HCT116 (cell line): ENCODE measurements at regions of chr10 and their contacts with region 1.

Region 1: GRCh38 chr10:113802997-113803396 is 50.9 kb downstream of the DCLRE1A start:
- DNase-seq: no peak
- ATAC-seq: no peak
- H3K4me3 ChIP-seq: no peak overlapping the region
- H3K27ac ChIP-seq: no peak overlapping the region
- H3K4me1 ChIP-seq: no peaks in the 10 kb centered on the region
- H3K27me3 ChIP-seq: peaks cover 6% of the 10 kb centered on the region; the same call in 1 of the 2 replicates
- CTCF ChIP-seq: no peak
- POLR2A ChIP-seq: no peak
- RAD21 ChIP-seq: no peak

Region 2: DNA sequence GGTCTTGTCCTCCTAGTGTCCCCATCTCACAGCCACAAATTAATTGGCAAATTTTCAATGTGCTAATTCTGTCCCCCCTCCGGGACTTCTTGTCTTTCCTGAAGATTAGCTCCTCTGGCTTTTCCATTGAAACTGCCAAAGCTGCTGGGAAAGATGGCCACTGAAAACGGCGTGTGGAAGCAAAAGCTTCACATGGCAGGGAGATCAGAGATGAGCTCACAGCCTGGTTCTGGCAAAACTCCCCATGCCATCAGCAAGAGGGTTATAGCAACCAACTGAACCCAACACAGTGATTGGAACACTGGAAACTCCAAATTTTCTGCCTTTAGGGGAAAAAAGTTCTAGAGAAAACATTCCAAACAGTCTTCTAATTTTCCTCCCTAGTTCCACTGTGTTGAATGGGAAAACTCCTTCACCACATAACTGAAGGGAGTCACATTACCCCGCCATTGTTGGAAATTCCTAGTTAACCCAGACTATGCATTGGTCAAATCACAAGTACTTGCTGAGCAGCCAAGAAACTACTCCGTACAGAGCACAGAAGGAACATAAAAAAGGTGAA is 176.1 kb before region 1 on chr10:
- CTCF ChIA-PET with region 1: no interaction called
- POLR2A ChIA-PET with region 1: no interaction called
- RAD21 ChIA-PET with region 1: no interaction called
- intact Hi-C with region 1: no loop called
- DNase-seq: no peak
- ATAC-seq: no peak
- H3K4me3 ChIP-seq: no peak overlapping the region
- H3K27ac ChIP-seq: no peak overlapping the region
- H3K4me1 ChIP-seq: no peaks in the 10 kb centered on the region
- H3K27me3 ChIP-seq: peaks cover 59% of the 10 kb centered on the region
- CTCF ChIP-seq: no peak
- POLR2A ChIP-seq: no peak
- RAD21 ChIP-seq: no peak

Region 3: GRCh38 chr10:113704637-113705343 is 98.2 kb before region 1 on chr10:
- CTCF ChIA-PET with region 1: interaction called, 6 read pairs
- POLR2A ChIA-PET with region 1: no interaction called
- RAD21 ChIA-PET with region 1: no interaction called
- intact Hi-C with region 1: loop called (anchors 5 kb)
- DNase-seq: peak; percentile 38
- ATAC-seq: peak; percentile 82
- H3K4me3 ChIP-seq: no peak overlapping the region
- H3K27ac ChIP-seq: no peak overlapping the region
- H3K4me1 ChIP-seq: no peaks in the 10 kb centered on the region
- H3K27me3 ChIP-seq: no peaks in the 10 kb centered on the region
- CTCF ChIP-seq: peak; percentile 72 to 87 (median 80)
- POLR2A ChIP-seq: no peak
- RAD21 ChIP-seq: peak; percentile 84

Region 4: DNA sequence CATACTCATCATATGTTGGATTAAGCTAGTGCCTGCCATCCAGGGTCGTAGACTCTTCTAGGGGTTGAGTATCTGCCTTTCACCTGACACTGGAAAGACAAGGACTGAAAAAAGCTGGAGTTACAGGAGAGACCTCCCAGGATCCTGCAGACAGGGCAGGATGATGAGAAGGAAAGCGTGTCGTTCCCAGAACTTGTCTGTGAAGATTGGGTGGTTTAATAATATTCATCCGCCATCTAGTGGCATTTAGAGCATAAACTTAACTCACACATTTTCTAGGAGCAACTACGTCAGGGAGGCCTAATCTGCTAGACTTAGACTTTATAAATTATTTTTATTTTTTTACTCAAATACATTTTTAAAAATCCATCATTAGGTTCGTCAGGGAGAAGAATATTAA is 300.3 kb after region 1 on chr10:
- CTCF ChIA-PET with region 1: interaction called, 16 read pairs
- POLR2A ChIA-PET with region 1: interaction called, 3 read pairs
- RAD21 ChIA-PET with region 1: interaction called, 3 to 6 read pairs
- intact Hi-C with region 1: loop called (anchors 1 kb)
- DNase-seq: peak; percentile 58
- ATAC-seq: peak; percentile 93
- H3K4me3 ChIP-seq: no peak overlapping the region
- H3K27ac ChIP-seq: no peak overlapping the region
- H3K4me1 ChIP-seq: 0 out of 4 replicates have a peak, but pooled peaks cover 0 to 4% of the 10 kb centered on the region in 2 experiments
- H3K27me3 ChIP-seq: no peaks in the 10 kb centered on the region
- CTCF ChIP-seq: peak; percentile 56 to 91 (median 63)
- POLR2A ChIP-seq: no peak
- RAD21 ChIP-seq: peak; percentile 98

Region 5: GRCh38 chr10:114110174-114110972 is 307.4 kb after region 1 on chr10:
- CTCF ChIA-PET with region 1: interaction called, 11 read pairs
- POLR2A ChIA-PET with region 1: no interaction called
- RAD21 ChIA-PET with region 1: no interaction called
- intact Hi-C with region 1: no loop called
- DNase-seq: no peak
- ATAC-seq: peak; percentile 94
- H3K4me3 ChIP-seq: no peak overlapping the region
- H3K27ac ChIP-seq: no peak overlapping the region
- H3K4me1 ChIP-seq: no peaks in the 10 kb centered on the region
- H3K27me3 ChIP-seq: peaks cover 18% of the 10 kb centered on the region; the same call in 1 of the 2 replicates
- CTCF ChIP-seq: peak; percentile 46 to 64 (median 64); a peak in 5 of 6 replicates
- POLR2A ChIP-seq: no peak
- RAD21 ChIP-seq: peak; percentile 84

Region 6: DNA sequence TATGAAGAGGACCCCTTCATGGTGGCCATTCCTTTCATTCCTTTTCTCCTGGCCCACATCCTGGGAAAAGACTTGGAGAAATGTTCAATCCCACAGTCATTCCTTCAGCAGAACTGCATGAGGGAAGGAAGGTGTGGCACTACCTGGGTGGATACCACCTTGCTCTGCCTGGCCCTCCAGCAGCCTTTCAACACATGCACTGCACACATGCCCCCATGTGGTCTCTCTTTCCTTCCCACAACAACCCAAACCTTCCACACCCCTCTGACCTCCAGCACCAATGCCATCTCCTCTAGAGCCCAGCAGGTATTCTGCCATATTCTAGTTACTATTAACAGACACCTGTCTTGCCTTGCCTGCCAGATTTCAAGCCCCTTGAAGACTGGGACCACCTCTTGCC is 641.8 kb after region 1 on chr10:
- CTCF ChIA-PET with region 1: no interaction called
- POLR2A ChIA-PET with region 1: no interaction called
- RAD21 ChIA-PET with region 1: no interaction called
- intact Hi-C with region 1: loop called (anchors 5 kb)
- DNase-seq: no peak
- ATAC-seq: no peak
- H3K4me3 ChIP-seq: no peak overlapping the region
- H3K27ac ChIP-seq: no peak overlapping the region
- H3K4me1 ChIP-seq: no peaks in the 10 kb centered on the region
- H3K27me3 ChIP-seq: no peaks in the 10 kb centered on the region
- CTCF ChIP-seq: no peak
- POLR2A ChIP-seq: no peak
- RAD21 ChIP-seq: peak; percentile 14; the same call in 1 of the 2 replicates